ENCODE measurements at regions of chr5 and their contacts with region 1.

Region 1: GRCh38 chr5:172816901-172817564 is 17.0 kb upstream of the ERGIC1 start:
- DNase-seq: peak; percentile 86
- H3K4me3 ChIP-seq: no peak overlapping the region
- H3K27ac ChIP-seq: peak overlapping the region; percentile 50
- H3K4me1 ChIP-seq: peaks cover 27% of the 10 kb centered on the region
- H3K27me3 ChIP-seq: no peaks in the 10 kb centered on the region
- CTCF ChIP-seq: no peak

Region 2: DNA sequence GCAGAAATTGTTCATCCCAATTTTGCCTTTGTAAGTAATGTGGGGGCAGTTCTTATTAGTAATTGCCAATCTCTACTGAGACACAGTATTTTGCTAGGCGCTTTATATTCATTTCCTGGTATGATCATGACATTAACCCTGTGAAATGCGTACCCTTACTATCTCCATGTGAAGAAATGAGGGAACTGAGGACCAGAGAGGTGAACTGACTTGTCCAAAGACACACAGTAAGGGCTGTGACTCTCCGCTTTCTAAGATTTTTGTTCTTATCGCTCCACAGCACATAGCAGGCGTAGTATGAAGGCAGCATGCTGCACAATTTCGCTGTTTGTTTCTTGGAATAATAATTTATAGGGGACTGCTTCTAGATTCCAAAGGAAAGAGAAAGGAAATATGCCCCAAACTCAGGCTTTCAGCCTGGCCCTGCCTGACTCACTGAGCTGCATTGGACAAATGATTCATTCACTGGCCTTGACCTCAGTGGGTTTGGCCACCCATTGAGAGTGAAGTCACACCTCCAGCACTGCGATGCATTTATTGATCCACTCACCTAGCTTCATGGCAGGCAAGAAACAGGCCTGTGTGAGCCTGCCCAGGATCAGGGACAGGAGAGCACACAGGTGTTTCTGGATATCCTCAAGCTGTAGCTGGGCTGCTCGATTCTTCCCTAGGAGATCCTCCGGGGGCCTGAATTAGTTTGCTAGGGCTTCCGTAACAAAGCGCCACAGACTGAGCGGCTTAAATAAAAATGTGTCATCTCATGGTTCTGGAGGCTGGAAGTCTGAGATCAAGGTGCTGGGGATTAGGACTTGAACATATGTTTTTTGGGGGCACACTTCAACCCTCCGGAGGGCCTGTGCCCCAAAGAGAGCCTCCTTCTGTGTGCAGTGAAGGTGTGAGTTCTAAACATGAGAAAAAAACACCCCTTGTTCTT is 38.9 kb before region 1 on chr5:
- CTCF ChIA-PET with region 1: no interaction called
- dilution Hi-C with region 1: loop called (anchors 5 kb)
- in situ Hi-C with region 1: no loop called
- intact Hi-C with region 1: no loop called
- DNase-seq: peak; percentile 97
- H3K4me3 ChIP-seq: no peak overlapping the region
- H3K27ac ChIP-seq: peak overlapping the region; percentile 97
- H3K4me1 ChIP-seq: peaks cover 42% of the 10 kb centered on the region
- H3K27me3 ChIP-seq: no peaks in the 10 kb centered on the region
- CTCF ChIP-seq: no peak

Region 3: GRCh38 chr5:172868924-172869591 is 52.0 kb after region 1 on chr5:
- CTCF ChIA-PET with region 1: no interaction called
- dilution Hi-C with region 1: no loop called
- in situ Hi-C with region 1: no loop called
- intact Hi-C with region 1: no loop called
- DNase-seq: peak; percentile 76
- H3K4me3 ChIP-seq: no peak overlapping the region
- H3K27ac ChIP-seq: peak overlapping the region; percentile 86
- H3K4me1 ChIP-seq: peaks cover 58% of the 10 kb centered on the region
- H3K27me3 ChIP-seq: no peaks in the 10 kb centered on the region
- CTCF ChIP-seq: peak in 1 of 2 donors; percentile 35

Region 4: DNA sequence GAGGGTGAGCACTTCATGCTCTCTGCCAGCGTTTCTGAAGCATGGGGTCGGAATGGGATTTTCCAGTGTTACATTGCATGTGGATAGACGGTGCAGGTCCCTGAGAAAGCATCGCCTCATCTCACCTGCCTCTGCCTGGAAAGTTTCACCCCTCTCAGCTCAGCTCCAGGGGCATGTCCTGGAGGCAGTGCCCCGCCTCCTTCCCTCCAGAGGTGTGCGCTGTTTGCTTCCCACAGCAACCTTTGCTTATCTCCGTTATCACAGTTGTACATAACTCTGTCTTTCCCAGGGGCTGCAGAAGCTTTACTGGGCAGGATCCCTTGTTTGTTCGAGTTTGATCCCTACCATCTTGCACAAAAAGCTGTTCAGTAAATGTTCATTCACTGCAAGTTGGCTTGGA is 228.4 kb after region 1 on chr5:
- CTCF ChIA-PET with region 1: no interaction called
- dilution Hi-C with region 1: no loop called
- in situ Hi-C with region 1: no loop called
- intact Hi-C with region 1: no loop called
- DNase-seq: no peak
- H3K4me3 ChIP-seq: no peak overlapping the region
- H3K27ac ChIP-seq: no peak overlapping the region
- H3K4me1 ChIP-seq: no peaks in the 10 kb centered on the region
- H3K27me3 ChIP-seq: no peaks in the 10 kb centered on the region
- CTCF ChIP-seq: no peak

Measured in mammary epithelial cell (primary cell).